Breast epithelium (tissue), 4 donors: ENCODE measurements at regions of chr10 and their contacts with region 1.

Region 1: GRCh38 chr10:50929670-50930069 is 44.2 kb upstream of the A1CF start:
- DNase-seq: no peak
- H3K4me3 ChIP-seq: no peak overlapping the region
- H3K27ac ChIP-seq: no peak overlapping the region
- H3K4me1 ChIP-seq: no peaks in the 10 kb centered on the region
- H3K27me3 ChIP-seq: no peaks in the 10 kb centered on the region
- CTCF ChIP-seq: no peak
- POLR2A ChIP-seq: no peak

Region 2: DNA sequence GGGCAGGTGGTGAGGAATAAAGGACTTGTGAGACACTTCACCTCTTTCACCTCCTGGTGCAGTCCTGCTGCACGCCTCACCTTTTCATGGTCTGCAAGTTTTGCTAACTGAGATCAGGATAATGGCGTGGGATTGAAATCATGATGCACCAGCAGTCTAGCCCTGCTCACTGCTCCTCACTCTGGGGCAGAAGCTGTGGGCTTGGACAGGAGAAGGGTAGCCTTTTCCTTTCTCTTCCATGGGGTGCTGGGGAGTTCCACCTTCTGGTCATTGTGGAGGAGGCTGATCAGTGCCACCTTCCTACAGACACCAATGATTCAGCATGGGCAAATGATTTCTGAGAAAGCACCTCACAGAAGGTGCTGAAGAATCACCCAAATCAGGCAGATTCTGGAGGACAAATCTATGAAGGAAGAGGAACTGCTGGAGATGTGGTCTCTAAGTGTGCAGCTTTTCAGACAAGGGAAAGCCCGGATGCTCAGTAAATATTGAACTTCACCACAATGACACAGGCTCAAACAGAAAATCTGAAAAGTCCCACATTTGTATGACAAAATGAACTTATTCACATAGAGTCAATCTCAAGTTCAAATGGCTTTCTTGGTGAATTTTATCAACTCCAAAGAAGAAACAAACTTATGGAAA is 1823.3 kb after region 1 on chr10:
- intact Hi-C with region 1: loop called (anchors 5 kb)
- DNase-seq: no peak
- H3K4me3 ChIP-seq: no peak overlapping the region
- H3K27ac ChIP-seq: no peak overlapping the region
- H3K4me1 ChIP-seq: no peaks in the 10 kb centered on the region
- H3K27me3 ChIP-seq: no peaks in the 10 kb centered on the region
- CTCF ChIP-seq: no peak
- POLR2A ChIP-seq: no peak